Right ventricle myocardium inferior (tissue), 1 donor: ENCODE measurements at regions of chr17 and their contacts with region 1.

Region 1: DNA sequence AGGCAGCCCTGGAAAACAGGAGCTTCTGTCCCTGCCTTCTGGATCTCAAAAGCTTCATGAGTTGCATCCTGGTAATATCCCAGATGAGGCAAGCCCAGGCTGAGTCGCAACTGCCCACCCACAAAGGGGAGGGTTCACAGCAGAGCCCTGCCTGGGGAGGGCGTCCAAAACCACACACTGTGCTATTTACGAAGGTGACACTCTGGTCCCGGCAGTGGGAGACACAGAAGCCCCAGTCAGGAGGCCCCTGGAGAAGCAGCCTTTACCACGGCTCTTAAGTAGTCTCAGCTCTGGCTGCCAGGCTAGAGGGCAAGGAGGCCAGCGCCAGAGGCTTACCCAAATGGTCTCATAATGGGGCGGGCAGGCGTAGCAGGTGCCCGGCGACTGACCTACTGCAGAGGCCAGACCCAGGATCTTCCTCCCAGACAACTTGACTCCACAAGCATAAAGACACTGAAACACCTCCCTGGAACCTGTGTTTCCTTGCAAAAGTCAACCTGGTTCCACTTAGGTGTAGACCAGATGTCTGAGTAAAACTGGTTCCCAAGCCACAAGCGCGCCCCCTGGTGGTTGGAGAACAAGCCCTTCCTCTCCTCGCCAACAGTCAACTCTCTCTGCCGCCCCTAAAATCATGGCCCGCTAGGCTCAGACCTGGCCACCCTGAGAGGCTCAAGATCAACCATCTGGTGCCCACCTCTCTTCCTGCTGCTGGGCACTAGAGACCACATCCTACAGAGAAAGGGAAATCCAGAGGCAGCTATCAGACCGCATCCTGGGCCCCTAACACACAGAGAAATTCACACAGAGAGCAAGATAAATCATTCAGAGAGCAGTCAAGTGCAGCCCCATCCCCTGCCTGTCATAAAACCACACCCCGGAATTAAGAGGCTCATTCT is 5.2 kb downstream of the AXIN2 start:
- DNase-seq: peak; percentile 88
- ATAC-seq: peak; percentile 15

Region 2: DNA sequence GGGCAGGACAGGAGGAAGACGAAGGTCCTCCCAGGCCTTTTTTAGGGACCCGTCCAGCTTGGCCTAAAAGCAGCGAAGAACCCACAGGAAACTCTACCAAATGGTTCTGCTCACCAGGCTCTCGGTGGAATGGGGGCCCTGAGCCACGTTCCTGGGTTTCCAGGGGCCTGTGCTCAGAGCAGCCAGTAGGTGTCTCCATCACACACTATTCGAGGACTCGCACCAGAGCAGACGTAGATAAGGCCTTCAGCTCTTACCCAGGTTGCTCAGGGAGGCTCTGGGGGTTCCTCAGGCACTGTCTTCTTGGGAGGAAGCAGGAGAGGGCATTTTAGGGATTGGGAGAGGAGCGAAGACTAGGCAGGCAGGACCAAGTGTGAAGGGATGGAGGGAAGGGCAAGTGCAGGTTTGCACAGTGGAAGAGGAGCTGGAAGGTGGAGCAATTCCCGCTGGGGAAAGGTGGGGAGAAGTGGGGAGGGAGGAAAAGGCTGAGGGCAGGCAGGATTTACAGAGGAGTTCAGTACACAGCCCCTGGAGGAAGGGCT is 262.0 kb before region 1 on chr17:
- intact Hi-C with region 1: loop called (anchors 10 kb)
- DNase-seq: no peak
- ATAC-seq: peak; percentile 88

Region 3: DNA sequence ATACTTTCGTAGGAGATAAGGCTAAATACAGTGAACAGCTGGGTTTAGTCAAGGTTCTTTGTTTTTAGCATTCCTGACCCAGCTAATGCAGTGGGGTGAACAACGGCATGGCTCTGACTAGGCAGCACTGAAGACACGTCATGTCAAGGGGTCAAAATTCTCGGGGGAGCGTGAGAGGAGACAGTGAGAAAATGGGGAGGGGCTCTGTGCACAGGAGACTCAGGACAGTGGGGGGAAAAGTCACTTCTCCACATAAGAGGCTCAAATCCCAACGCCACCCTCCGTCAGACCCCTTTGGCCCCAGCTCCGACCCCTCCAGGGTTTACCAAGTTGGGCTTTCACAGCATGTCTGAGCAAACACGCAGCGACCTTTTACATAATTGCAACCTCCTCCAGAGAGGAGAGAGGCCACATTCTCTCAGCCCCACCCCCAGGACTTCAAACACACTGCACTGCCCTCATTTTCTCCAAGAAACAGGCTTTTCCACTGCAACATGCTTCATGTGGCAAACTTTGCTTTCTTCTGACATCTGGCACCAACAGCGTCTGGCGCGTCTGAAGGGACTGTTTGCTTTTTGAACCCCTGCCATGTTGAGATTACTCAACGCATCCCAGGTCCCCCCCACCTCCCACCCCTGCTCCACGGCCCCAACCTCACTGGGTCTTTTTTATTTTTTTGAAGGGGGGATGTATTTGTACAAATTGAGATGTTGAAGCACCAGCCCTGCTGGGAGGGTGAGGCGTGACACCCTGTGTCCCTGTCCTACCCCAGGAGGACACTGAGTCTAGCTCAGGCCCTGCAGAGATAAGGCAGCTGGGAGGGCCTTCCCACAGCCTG is 24.8 kb before region 1 on chr17:
- intact Hi-C with region 1: no loop called
- DNase-seq: peak; percentile 68
- ATAC-seq: peak; percentile 87

Region 4: DNA sequence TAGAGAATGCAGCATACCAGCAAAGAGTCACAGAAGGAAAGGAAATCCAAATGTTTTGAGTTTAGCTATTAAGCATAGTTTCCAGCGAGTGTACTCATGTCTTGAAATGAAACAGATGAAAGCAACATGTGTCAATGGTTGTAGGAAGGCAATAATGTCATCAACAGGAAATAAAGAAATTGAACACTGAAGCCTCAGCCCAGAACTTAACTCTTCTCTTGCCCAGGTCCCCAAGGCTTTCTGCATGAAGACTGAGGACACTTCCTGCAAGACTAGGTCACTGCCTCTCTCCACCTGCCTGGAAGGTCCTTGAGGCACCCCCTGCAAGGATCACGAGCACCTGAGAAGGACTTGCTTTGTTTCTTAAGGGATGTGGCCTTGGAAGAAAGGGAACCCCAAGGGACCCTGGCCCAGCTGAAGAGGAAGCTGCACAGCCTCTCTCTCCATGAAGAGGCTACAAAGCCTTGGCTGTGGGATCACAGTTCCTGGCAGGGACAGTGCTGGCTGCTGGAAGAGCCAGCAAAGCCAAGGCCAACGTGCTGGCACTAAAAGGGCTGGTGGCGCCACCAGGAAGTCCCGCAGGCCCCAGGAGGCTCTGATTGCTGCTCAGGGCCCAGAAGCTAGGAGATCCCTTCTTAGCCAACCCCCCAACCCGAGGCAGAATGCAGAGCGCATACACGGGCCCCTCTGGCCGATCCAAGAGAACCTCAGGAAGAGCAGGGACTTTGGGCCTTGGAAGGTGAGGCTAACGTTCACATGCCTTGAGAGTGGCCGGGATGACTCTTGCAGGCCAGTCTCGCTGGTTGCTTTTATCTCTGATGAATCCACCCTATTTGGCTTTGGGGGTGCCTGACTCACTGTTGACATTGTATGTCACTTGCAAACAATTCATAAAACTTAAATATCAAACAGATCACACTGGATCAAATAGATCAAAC is 28.6 kb after region 1 on chr17:
- intact Hi-C with region 1: no loop called
- DNase-seq: no peak
- ATAC-seq: peak; percentile 64

Region 5: GRCh38 chr17:65813306-65813705 is 257.0 kb after region 1 on chr17:
- intact Hi-C with region 1: no loop called
- DNase-seq: no peak
- ATAC-seq: no peak